Head of caudate nucleus (tissue), 42 donors: ENCODE measurements at regions of chr7 and their contacts with region 1.

Region 1: GRCh38 chr7:22488643-22489462 is 11.1 kb downstream of the STEAP1B start:
- DNase-seq: peak; percentile 49 to 94 (median 84)

Region 2: DNA sequence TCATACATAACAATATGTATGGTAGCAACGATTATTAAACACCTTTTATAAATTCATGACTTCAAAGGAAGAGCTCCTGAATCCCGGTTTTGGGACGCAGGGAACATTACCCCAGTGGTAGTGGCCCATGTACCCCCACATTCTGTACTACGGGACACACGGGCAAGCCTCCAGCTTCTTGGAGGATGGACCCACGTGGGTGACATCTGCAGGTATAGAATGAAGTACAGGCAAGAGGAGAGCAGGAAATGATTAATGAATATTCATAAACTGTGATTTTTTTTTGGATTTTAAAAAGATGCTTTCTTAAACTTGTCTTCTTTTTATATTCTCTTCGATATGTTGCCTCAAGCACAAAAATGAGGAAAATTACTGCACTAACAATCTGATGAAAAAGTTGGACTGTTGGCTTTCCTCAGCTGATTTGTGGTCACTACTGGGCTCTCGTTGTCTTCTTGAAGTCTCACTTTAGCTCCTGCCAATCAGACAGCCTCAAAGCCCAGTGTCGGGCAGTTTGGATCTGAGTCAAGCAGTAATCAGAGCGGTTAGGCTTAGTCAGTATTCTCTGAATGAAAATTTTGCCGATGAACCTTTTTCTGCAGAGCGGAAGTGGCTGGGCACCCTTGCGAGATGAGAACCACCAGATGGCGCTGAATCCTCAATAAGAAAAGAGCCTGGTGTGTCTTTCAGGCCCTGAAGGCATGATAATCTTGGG is 385.4 kb before region 1 on chr7:
- intact Hi-C with region 1: loop called (anchors 5 kb)
- DNase-seq: peak in 41 of 42 donors; percentile 46 to 94 (median 83)

Region 3: GRCh38 chr7:22295402-22296264 is 193.2 kb before region 1 on chr7:
- intact Hi-C with region 1: loop called (anchors 10 kb)
- DNase-seq: peak in 3 of 42 donors; percentile 10 to 63 (median 29)

Region 4: GRCh38 chr7:22319424-22320403 is 169.1 kb before region 1 on chr7:
- intact Hi-C with region 1: no loop called
- DNase-seq: peak in 1 of 42 donors; percentile 47